Activated naive CD4-positive, alpha-beta T cell treated with anti-CD3 and anti-CD28 coated beads, Interleukin-2, amount 10 ng/mL, durations not matched to agents 7 days and 5 days (primary cell): ENCODE measurements at regions of chr3 and their contacts with region 1.

Region 1: DNA sequence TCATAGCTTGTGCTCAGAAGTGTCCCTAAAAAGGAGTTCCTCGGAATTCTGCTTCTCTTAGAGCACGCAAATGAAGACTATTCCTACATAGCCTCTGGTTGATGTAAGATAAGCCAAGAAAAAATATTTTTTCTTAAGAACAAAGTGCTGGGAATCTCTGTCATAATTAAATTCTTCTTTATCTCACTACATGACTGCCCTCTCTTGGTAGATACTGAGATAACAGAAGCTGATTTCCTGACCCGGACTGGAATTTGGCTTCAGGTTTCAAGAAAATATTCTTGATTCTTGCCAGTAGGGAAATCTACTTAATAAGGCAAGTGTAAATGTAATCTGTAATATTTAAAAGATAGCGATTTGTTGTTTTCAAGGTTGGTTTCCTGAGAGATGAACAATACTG is 31.3 kb upstream of the SETMAR start:
- DNase-seq: no peak
- H3K4me3 Mint-ChIP-seq: no peak overlapping the region
- H3K27ac Mint-ChIP-seq: no peak overlapping the region
- H3K4me1 Mint-ChIP-seq: peaks cover 10% of the 10 kb centered on the region
- H3K27me3 Mint-ChIP-seq: no peaks in the 10 kb centered on the region

Region 2: DNA sequence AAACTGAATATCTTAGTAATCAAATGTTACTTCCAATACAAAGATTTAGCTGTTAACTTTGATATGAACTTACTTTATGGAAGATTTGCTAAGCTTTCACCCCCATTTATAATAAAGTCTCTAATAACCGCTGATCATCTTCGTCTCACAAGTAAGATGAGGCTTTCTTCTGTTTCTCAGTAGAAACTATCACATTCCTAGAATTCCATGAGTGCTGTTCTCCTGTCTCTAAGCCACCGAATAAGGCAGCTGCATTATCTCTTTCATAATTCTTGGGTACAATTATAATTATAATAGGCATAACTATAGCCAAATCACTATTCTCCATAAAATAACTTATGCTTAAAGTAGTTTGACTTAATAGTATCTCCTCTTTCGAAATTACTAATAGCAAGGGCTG is 13.0 kb after region 1 on chr3:
- CTCF ChIA-PET with region 1: interaction called, 10 read pairs
- DNase-seq: no peak
- H3K4me3 Mint-ChIP-seq: no peak overlapping the region
- H3K27ac Mint-ChIP-seq: no peak overlapping the region
- H3K4me1 Mint-ChIP-seq: no peaks in the 10 kb centered on the region
- H3K27me3 Mint-ChIP-seq: peaks cover 3% of the 10 kb centered on the region